Activated naive CD4-positive, alpha-beta T cell treated with anti-CD3 and anti-CD28 coated beads, Interleukin-2, amount 10 ng/mL, durations not matched to agents 7 days and 5 days (primary cell): ENCODE measurements at regions of chr1 and their contacts with region 1.

Region 1: GRCh38 chr1:209627732-209628196 is 24.5 kb downstream of the LAMB3 start:
- DNase-seq: peak; percentile 84
- H3K4me3 Mint-ChIP-seq: no peak overlapping the region
- H3K27ac Mint-ChIP-seq: no peak overlapping the region
- H3K4me1 Mint-ChIP-seq: no peaks in the 10 kb centered on the region
- H3K27me3 Mint-ChIP-seq: peaks cover 32% of the 10 kb centered on the region

Region 2: DNA sequence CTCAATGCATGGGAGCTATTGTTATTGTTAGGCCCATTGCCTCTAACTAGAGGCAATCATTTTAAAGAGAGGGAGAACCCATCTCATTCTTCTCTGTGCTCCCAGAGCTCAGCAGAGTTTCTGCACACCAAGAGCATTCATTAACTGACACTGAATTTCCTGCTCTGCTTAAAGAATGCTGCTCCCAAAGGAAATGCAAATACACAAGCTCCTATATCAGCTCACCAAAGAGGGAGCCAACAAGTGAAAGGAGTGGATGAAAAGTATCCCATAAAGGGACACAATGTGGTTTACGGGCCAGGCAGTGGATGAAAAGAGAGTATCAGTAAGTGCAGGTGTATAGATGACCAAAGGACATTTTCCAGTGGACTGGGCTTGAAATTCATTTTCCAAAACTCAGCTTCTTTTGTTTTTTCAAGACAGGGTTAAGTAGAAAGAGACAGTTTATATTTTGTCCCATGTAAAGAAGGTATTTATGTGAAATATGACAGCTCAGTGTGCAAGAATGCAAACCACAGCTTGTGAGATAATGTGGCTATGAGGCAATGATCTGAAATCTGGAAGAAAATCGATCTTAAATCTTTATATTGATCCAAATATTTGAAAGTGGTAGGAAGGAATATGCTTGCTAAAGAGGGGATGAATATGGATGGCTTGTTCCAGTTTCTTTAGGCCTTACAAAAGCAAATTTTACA is 251.9 kb before region 1 on chr1:
- CTCF ChIA-PET with region 1: no interaction called
- DNase-seq: no peak
- H3K4me3 Mint-ChIP-seq: no peak overlapping the region
- H3K27ac Mint-ChIP-seq: no peak overlapping the region
- H3K4me1 Mint-ChIP-seq: no peaks in the 10 kb centered on the region
- H3K27me3 Mint-ChIP-seq: peaks cover 6% of the 10 kb centered on the region

Region 3: DNA sequence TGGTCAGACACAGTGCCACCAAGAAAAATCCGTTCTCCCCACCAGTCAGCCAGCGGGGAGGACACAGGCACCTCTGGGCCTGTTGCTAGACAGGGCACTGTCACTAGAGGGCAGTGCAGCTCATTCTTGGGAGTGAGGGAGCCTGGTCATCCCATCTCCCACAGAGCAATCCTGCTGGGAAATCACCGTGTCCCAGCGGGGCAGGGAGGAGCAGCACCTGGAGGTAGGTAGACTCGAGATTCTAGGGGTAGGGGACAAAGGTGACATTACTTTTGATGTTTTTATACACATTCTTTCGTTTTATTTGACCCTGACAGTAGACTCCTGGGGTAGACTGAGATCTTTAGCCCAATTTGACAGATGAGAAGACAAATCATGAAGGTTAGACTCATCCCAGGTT is 51.0 kb before region 1 on chr1:
- CTCF ChIA-PET with region 1: interaction called, 36 read pairs
- DNase-seq: peak; percentile 80
- H3K4me3 Mint-ChIP-seq: no peak overlapping the region
- H3K27ac Mint-ChIP-seq: no peak overlapping the region
- H3K4me1 Mint-ChIP-seq: no peaks in the 10 kb centered on the region
- H3K27me3 Mint-ChIP-seq: peaks cover 39% of the 10 kb centered on the region

Region 4: DNA sequence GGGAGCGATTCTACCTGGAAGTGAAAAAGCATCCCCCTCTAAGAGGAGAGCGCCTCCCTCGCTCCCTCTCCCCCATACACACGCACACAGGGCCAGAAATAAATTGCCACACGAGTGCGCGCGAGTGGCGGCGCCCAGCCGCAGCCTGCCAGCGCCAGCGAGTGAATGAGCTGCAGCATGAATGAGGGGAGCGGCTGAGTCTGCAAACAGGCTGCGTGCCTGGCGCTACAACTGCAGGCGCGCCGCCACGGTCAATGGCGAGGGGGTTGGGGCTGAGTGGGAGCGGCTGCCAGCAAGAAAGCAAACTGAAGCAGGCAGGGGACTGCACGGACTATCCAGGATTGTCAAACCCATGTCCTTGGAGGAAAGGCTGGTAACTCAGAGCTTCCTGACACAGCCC is 42.1 kb before region 1 on chr1:
- CTCF ChIA-PET with region 1: interaction called, 10 read pairs
- DNase-seq: peak; percentile 40
- H3K4me3 Mint-ChIP-seq: no peak overlapping the region
- H3K27ac Mint-ChIP-seq: no peak overlapping the region
- H3K4me1 Mint-ChIP-seq: peaks cover 2% of the 10 kb centered on the region
- H3K27me3 Mint-ChIP-seq: peaks cover 16% of the 10 kb centered on the region

Region 5: GRCh38 chr1:209601809-209602657 is 25.7 kb before region 1 on chr1:
- CTCF ChIA-PET with region 1: interaction called, 62 read pairs
- DNase-seq: peak; percentile 58
- H3K4me3 Mint-ChIP-seq: no peak overlapping the region
- H3K27ac Mint-ChIP-seq: no peak overlapping the region
- H3K4me1 Mint-ChIP-seq: peaks cover 4% of the 10 kb centered on the region
- H3K27me3 Mint-ChIP-seq: peaks cover 13% of the 10 kb centered on the region

Region 6: GRCh38 chr1:209607102-209607794 is 20.5 kb before region 1 on chr1:
- CTCF ChIA-PET with region 1: interaction called, 62 read pairs
- DNase-seq: no peak
- H3K4me3 Mint-ChIP-seq: no peak overlapping the region
- H3K27ac Mint-ChIP-seq: no peak overlapping the region
- H3K4me1 Mint-ChIP-seq: peaks cover 15% of the 10 kb centered on the region
- H3K27me3 Mint-ChIP-seq: no peaks in the 10 kb centered on the region

Region 7: GRCh38 chr1:209617047-209617673 is 10.6 kb before region 1 on chr1:
- CTCF ChIA-PET with region 1: interaction called, 27 read pairs
- DNase-seq: no peak
- H3K4me3 Mint-ChIP-seq: no peak overlapping the region
- H3K27ac Mint-ChIP-seq: no peak overlapping the region
- H3K4me1 Mint-ChIP-seq: peaks cover 26% of the 10 kb centered on the region
- H3K27me3 Mint-ChIP-seq: peaks cover 21% of the 10 kb centered on the region